ENCODE measurements at regions of chr1 and their contacts with region 1.

Region 1: GRCh38 chr1:221878134-221878533 is 136.2 kb upstream of the DUSP10 start:
- DNase-seq: no peak
- H3K4me3 Mint-ChIP-seq: no peak overlapping the region
- H3K27ac Mint-ChIP-seq: no peak overlapping the region
- H3K4me1 Mint-ChIP-seq: peaks cover 11% of the 10 kb centered on the region
- H3K27me3 Mint-ChIP-seq: peaks cover 5% of the 10 kb centered on the region

Region 2: GRCh38 chr1:221725735-221726672 is 152.1 kb before region 1 on chr1:
- intact Hi-C with region 1: loop called (anchors 5 kb)
- DNase-seq: no peak
- H3K4me3 Mint-ChIP-seq: peak overlapping the region; percentile 55
- H3K27ac Mint-ChIP-seq: peak overlapping the region; percentile 92
- H3K4me1 Mint-ChIP-seq: peaks cover 87% of the 10 kb centered on the region
- H3K27me3 Mint-ChIP-seq: no peaks in the 10 kb centered on the region

Region 3: DNA sequence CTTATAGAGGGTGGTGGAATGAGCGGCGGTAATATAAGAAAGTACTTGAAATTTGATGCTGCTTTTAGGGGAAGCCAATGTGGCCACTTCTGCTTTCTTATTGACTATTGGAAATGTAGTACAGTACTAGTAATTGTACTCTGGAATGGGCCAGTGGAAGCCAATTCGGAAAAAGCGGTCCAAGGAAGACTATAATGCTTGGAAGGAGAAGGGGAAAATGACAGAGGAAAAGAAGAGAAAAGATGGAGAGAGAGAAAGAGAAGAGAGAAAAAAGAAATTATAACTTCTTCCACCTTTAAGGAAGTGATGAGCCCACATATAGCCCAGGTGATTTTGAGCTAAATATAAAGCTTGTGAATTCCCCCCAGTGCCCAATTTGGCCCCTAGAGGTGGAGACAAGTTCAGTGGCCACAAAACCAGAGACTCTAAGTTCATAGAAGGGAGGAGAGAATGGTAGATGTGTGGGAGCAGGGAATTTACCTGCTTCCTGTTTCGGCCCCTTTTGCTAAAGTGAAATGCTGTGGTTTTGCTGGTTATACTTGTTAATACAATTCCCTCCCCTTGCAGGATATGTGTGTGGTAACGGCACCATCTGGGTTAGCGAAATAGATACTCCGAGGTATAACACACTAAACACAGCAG is 100.6 kb before region 1 on chr1:
- intact Hi-C with region 1: no loop called
- DNase-seq: peak; percentile 55
- H3K4me3 Mint-ChIP-seq: peak overlapping the region; percentile 79
- H3K27ac Mint-ChIP-seq: peak overlapping the region; percentile 98
- H3K4me1 Mint-ChIP-seq: peaks cover 92% of the 10 kb centered on the region
- H3K27me3 Mint-ChIP-seq: no peaks in the 10 kb centered on the region

Region 4: GRCh38 chr1:221823149-221823548 is 55.0 kb before region 1 on chr1:
- intact Hi-C with region 1: no loop called
- DNase-seq: no peak
- H3K4me3 Mint-ChIP-seq: no peak overlapping the region
- H3K27ac Mint-ChIP-seq: peak overlapping the region; percentile 22
- H3K4me1 Mint-ChIP-seq: peaks cover 56% of the 10 kb centered on the region
- H3K27me3 Mint-ChIP-seq: peaks cover 8% of the 10 kb centered on the region